HCT116 (cell line): ENCODE measurements at regions of chr21 and their contacts with region 1.

Region 1: GRCh38 chr21:32748529-32748928 is 20.7 kb upstream of the SYNJ1 start:
- DNase-seq: no peak
- ATAC-seq: no peak
- H3K4me3 ChIP-seq: no peak overlapping the region
- H3K27ac ChIP-seq: no peak overlapping the region
- H3K4me1 ChIP-seq: no peaks in the 10 kb centered on the region
- H3K27me3 ChIP-seq: no peaks in the 10 kb centered on the region
- CTCF ChIP-seq: no peak
- POLR2A ChIP-seq: no peak
- RAD21 ChIP-seq: no peak

Region 2: DNA sequence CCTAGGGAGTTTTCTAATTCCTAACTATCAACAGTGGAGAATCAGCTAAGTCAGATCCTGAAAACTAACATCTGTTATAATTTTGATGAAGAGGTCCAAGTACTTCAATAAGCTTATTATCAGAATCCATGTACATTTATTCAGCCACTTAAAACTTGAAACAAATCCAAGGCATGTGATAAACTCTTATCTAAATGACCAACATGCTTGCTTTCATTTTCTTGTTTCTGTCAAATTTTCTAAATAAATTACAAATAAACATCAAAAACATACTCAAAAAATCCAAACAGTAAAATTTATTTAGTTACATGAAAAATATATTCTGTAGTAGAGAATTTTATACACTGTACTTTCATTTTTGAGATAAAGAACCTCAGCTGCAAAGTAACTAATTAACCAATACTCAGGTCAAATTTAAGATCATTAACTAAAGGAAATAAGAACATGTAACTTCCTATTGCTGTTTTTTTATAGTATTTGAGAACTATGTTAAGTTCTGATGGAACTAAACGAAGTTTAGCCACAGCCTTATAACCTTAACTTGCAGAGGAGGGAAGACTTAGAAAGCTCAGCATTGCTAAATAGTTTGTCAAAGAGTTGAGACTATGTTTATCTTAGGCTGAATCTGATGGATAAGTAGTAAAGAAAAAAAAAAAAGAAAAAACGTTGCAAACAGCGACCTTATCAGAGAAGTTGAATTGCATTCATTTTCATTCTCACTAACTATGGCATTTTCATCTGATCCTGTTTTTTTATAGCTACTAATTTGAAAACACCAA is 65.6 kb before region 1 on chr21:
- CTCF ChIA-PET with region 1: no interaction called
- POLR2A ChIA-PET with region 1: no interaction called
- RAD21 ChIA-PET with region 1: no interaction called
- intact Hi-C with region 1: loop called (anchors 2 kb)
- DNase-seq: no peak
- ATAC-seq: no peak
- H3K4me3 ChIP-seq: no peak overlapping the region
- H3K27ac ChIP-seq: no peak overlapping the region
- H3K4me1 ChIP-seq: no peaks in the 10 kb centered on the region
- H3K27me3 ChIP-seq: no peaks in the 10 kb centered on the region
- CTCF ChIP-seq: no peak
- POLR2A ChIP-seq: no peak
- RAD21 ChIP-seq: no peak

Region 3: DNA sequence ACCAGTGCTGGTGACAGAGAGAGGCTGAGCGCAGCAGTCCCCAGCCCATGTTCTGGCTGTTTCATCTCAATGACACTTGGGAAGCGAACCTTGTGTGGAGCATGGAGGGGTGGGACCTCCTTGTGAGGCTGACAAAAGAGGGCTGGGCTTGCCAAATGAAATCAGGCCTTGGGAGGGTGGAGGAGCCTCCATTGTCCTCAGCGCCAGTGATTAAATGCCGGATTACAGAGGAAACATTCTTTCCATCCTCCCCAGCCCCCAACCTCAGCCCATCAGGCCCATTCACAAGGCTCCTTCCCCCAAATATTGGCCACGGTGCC is 86.3 kb after region 1 on chr21:
- CTCF ChIA-PET with region 1: no interaction called
- POLR2A ChIA-PET with region 1: no interaction called
- RAD21 ChIA-PET with region 1: no interaction called
- intact Hi-C with region 1: no loop called
- DNase-seq: no peak
- ATAC-seq: no peak
- H3K4me3 ChIP-seq: no peak overlapping the region
- H3K27ac ChIP-seq: no peak overlapping the region
- H3K4me1 ChIP-seq: no peaks in the 10 kb centered on the region
- H3K27me3 ChIP-seq: peaks cover 7% of the 10 kb centered on the region
- CTCF ChIP-seq: no peak
- POLR2A ChIP-seq: no peak
- RAD21 ChIP-seq: no peak

Region 4: DNA sequence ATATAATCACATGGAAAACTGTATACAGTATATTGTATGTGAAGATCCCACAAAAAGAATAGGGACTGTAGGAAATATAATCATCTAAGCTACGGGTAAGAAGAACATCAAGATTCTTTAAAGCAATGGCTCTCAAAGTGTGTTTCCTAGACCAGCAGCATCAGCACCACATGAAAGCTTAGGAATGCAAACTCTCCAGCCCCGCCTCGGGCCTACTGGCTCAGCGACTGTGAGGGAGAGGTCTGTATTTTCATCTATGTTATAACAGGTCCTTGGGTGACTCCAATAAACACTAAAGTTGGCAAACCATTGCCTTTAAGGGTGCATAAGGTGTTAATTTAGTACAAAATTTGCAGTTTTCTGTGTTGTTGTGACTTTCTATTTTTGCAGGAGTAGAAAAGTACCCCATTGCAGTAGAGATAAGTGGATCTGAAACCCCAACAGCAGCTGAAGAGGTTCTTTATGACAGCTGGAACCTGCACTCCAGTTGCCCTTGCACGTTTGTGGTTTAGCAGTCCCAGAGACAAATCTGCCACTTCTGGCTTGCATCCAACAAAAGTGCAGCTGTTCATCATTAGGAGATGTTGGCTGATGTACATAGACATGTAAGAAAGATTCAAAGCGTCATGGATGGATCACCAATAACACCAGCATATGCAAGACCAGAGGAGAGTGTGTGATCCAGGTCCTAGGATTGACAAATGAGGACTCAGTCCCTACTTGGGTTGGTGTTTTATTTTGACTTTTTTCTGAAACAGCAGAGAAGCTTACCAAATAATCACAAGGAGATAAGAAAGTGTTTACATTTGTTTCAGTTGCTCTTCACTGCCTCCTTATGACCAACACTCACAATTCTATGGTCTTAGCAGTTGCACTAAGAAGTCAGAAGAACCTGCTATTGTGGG is 560.3 kb after region 1 on chr21:
- CTCF ChIA-PET with region 1: no interaction called
- POLR2A ChIA-PET with region 1: no interaction called
- RAD21 ChIA-PET with region 1: no interaction called
- intact Hi-C with region 1: no loop called
- DNase-seq: no peak
- ATAC-seq: no peak
- H3K4me3 ChIP-seq: no peak overlapping the region
- H3K27ac ChIP-seq: no peak overlapping the region
- H3K4me1 ChIP-seq: no peaks in the 10 kb centered on the region
- H3K27me3 ChIP-seq: no peaks in the 10 kb centered on the region
- CTCF ChIP-seq: no peak
- POLR2A ChIP-seq: no peak
- RAD21 ChIP-seq: no peak